ENCODE measurements at regions of chr1 and their contacts with region 1.

Region 1: DNA sequence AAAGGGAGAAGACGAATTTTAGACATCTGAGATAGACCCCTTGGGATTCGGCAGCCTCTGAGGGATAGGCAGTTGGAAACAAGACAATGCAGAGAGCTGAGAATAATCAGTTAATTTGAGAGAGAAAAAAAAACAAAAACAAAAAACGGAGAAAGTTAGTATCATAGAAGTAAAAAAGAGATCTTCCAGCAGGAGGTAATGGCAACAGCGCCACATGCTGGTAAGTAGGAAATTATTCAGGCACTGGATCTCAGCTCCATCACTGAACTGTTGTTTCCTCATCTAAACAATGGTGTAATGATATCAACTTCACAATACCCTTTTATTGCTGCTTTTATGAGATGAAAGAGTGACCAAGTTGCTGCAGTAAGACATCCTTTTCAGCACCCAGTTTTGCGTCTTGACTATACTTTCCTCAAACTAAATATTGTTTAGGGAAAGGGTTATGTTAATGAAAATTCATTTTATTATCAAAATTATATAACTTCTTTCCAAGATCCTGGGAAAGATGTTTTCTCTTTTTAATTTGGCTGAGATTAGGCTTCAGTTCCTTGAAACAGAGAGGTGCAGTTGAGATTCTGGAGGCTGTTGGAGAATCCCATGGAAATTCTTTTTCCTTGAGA is 91.4 kb upstream of the KCNA3 start:
- DNase-seq: peak in 33 of 35 experiments; percentile 24 to 87 (median 46)
- ATAC-seq: peak; percentile 58 to 83 (median 70)
- H3K4me3 ChIP-seq: no peak overlapping the region
- H3K4me3 Mint-ChIP-seq: no peak overlapping the region
- H3K27ac ChIP-seq: no peak overlapping the region
- H3K27ac Mint-ChIP-seq: peak overlapping the region in 1 of 2 donors; percentile 45
- H3K4me1 ChIP-seq: no peaks in the 10 kb centered on the region
- H3K4me1 Mint-ChIP-seq: peaks cover 4 to 9% (median 4%) of the 10 kb centered on the region in 3 donors
- H3K27me3 ChIP-seq: peaks cover 0 to 2% of the 10 kb centered on the region in 2 experiments
- H3K27me3 Mint-ChIP-seq: peaks cover 14 to 18% of the 10 kb centered on the region in 2 donors

Region 2: DNA sequence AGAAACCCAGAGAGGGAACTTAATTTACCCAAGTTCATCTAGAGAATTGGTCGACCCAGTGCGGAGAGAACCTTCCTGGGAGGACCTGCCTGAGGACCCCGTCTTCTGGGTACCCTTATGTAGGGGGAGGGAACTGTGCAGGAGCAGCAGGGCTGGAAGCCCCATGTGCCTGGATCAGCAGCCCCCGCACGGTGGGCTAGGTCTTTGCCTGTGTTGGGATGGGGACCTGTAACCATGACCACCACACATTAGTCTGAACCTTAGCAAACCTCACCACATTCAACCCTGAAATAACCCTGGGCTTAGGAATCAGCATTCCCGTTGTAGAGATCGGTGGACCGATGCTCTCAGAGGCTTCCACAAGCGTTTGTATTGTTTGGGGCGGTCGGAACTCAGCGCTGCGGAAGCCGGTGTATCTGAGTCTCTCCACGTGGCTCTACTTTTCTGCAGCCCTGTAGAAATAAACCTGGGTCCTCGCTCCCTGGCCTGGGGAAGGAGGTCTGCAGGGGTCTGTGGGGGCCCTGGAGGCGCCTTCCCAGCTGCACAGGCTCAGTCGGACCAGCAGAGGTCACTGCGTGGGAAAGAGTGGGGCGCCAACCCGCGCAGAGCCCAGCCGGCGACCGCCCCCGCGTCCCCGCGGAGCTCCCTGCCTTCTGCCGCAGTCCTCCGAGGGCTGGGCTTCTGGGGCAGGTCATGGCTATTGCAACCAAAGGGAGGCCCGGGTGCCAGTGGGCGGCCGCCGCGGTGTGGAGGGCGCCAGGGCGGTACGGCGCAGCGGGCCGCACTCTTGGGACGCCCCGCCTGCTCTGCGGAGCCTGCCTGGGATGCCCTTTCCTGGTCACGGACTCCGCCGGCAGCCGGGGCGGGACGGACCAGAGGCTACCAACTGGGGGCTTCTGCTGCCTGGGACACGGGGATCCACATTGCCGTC is 211.0 kb before region 1 on chr1:
- CTCF ChIA-PET with region 1: interaction called, 8 to 11 read pairs
- POLR2A ChIA-PET with region 1: no interaction called
- DNase-seq: peak in 34 of 35 experiments; percentile 13 to 72 (median 41)
- ATAC-seq: peak; percentile 86 to 97 (median 91)
- H3K4me3 ChIP-seq: peak overlapping the region in 1 of 2 donors; percentile 52
- H3K4me3 Mint-ChIP-seq: peak overlapping the region in 1 of 3 donors; percentile 62
- H3K27ac ChIP-seq: no peak overlapping the region
- H3K27ac Mint-ChIP-seq: no peak overlapping the region
- H3K4me1 ChIP-seq: peaks cover 0 to 9% of the 10 kb centered on the region in 2 experiments
- H3K4me1 Mint-ChIP-seq: peaks cover 4 to 6% (median 5%) of the 10 kb centered on the region in 3 donors
- H3K27me3 ChIP-seq: peaks cover 2 to 47% of the 10 kb centered on the region in 2 experiments
- H3K27me3 Mint-ChIP-seq: peaks cover 53 to 69% of the 10 kb centered on the region in 2 donors

Region 3: GRCh38 chr1:110605901-110606656 is 160.1 kb before region 1 on chr1 and contains the start of gene KCNA2:
- CTCF ChIA-PET with region 1: interaction called, 3 to 10 read pairs
- POLR2A ChIA-PET with region 1: no interaction called
- DNase-seq: peak in 4 of 35 experiments; percentile 11 to 26 (median 12)
- ATAC-seq: peak; percentile 38 to 54 (median 40)
- H3K4me3 ChIP-seq: peak within 1 kb of the TSS; percentile 51 to 84
- H3K4me3 Mint-ChIP-seq: peak within 1 kb of the TSS; percentile 77 to 83 (median 79)
- H3K27ac ChIP-seq: no peak within 1 kb of the TSS
- H3K27ac Mint-ChIP-seq: no peak within 1 kb of the TSS
- H3K4me1 ChIP-seq: peaks cover 3 to 24% of the 10 kb centered on the region in 2 experiments
- H3K4me1 Mint-ChIP-seq: peaks cover 9 to 30% (median 12%) of the 10 kb centered on the region in 3 donors
- H3K27me3 ChIP-seq: peaks cover 22 to 48% of the 10 kb centered on the region in 2 experiments
- H3K27me3 Mint-ChIP-seq: peaks cover 20 to 60% of the 10 kb centered on the region in 2 donors
- total RNA-seq, gene KCNA2: 0.46 to 2.7 (median 0.93) TPM

Region 4: DNA sequence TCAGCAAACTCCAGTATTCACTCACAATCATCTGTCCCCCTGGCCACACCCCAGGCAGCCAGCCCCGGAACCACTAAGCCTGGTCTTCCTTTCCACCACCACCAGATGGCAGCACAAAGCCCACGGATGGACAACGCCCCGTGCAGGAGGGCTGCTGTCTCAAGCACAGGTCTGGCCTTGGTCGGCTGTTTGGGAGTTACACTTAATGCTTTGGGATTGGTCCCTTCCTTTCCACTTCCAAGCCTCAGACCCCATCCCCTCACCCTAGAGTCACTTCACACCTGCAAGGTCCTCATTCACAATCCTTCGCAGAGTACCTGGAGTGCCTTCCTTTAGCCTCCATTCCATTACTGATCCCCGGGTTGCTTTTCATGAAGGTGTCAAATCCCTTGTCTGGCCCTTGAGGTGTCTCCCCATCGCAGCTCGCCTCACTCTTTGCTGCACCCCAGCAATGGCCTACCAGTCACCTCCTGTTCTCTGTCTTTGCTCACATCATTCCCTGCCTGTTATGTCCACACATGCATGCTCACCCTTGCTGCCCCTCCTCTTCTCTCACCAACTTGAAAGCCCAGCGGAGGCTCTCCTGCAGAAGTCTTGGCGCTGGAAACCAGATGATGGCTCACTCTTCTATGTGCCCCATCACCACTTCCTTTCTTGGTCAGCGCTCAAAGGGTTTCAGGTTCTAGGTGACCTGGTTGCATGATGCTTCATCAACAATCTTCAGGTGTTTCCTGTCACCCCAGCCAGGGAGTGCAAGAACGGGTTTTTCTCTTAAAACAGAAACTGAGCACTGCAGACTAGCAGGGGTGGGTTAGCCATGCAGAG is 135.1 kb before region 1 on chr1:
- CTCF ChIA-PET with region 1: interaction called, 5 to 21 read pairs
- POLR2A ChIA-PET with region 1: no interaction called
- DNase-seq: peak; percentile 63 to 93 (median 79)
- ATAC-seq: peak; percentile 78 to 84 (median 80)
- H3K4me3 ChIP-seq: peak overlapping the region; percentile 19 to 36
- H3K4me3 Mint-ChIP-seq: no peak overlapping the region
- H3K27ac ChIP-seq: peak overlapping the region; percentile 88
- H3K27ac Mint-ChIP-seq: no peak overlapping the region
- H3K4me1 ChIP-seq: peaks cover 38 to 66% of the 10 kb centered on the region in 2 experiments
- H3K4me1 Mint-ChIP-seq: peaks cover 42 to 62% (median 53%) of the 10 kb centered on the region in 3 donors
- H3K27me3 ChIP-seq: no peaks in the 10 kb centered on the region
- H3K27me3 Mint-ChIP-seq: no peaks in the 10 kb centered on the region

Region 5: GRCh38 chr1:110780600-110781484 is 14.7 kb after region 1 on chr1:
- CTCF ChIA-PET with region 1: interaction called, 18 to 28 read pairs
- POLR2A ChIA-PET with region 1: no interaction called
- DNase-seq: peak; percentile 47 to 91 (median 67)
- ATAC-seq: peak; percentile 60 to 82 (median 67)
- H3K4me3 ChIP-seq: no peak overlapping the region
- H3K4me3 Mint-ChIP-seq: no peak overlapping the region
- H3K27ac ChIP-seq: no peak overlapping the region
- H3K27ac Mint-ChIP-seq: no peak overlapping the region
- H3K4me1 ChIP-seq: peaks cover 11 to 38% of the 10 kb centered on the region in 2 experiments
- H3K4me1 Mint-ChIP-seq: peaks cover 41 to 53% (median 41%) of the 10 kb centered on the region in 3 donors
- H3K27me3 ChIP-seq: peaks cover 0 to 7% of the 10 kb centered on the region in 2 experiments
- H3K27me3 Mint-ChIP-seq: peaks cover 6 to 9% of the 10 kb centered on the region in 2 donors

Region 6: GRCh38 chr1:110787328-110788071 is 21.4 kb after region 1 on chr1:
- CTCF ChIA-PET with region 1: interaction called, 18 to 28 read pairs
- POLR2A ChIA-PET with region 1: no interaction called
- DNase-seq: peak in 28 of 35 experiments; percentile 5 to 73 (median 33)
- ATAC-seq: peak; percentile 80 to 89 (median 86)
- H3K4me3 ChIP-seq: peak overlapping the region; percentile 25 to 30
- H3K4me3 Mint-ChIP-seq: peak overlapping the region; percentile 26 to 66 (median 53)
- H3K27ac ChIP-seq: peak overlapping the region; percentile 57
- H3K27ac Mint-ChIP-seq: peak overlapping the region; percentile 87 to 88
- H3K4me1 ChIP-seq: peaks cover 28 to 53% of the 10 kb centered on the region in 2 experiments
- H3K4me1 Mint-ChIP-seq: peaks cover 61 to 70% (median 67%) of the 10 kb centered on the region in 3 donors
- H3K27me3 ChIP-seq: no peaks in the 10 kb centered on the region
- H3K27me3 Mint-ChIP-seq: no peaks in the 10 kb centered on the region